Left colon (tissue), 2 donors: ENCODE measurements at regions of chr7 and their contacts with region 1.

Region 1: DNA sequence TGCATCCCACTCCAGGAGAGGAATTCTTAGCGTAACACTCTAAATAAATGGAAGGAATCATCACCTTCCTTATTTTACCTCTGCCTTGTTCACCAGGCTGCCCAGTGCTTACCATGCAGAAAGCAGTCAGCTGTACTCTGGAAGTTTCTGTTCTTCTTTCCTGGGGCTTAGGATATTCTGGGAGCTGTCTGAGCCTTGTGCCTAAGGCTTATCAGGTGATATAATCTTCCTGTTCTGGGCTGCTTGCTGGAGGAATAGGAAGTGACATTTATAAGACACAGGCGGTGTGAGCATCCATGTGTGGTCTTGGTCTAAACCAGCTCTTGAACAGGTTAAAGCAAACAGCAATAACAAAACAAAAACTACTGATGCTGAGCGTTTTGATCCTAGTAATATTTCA is 13.5 kb downstream of the KCTD7 start:
- DNase-seq: no peak
- ATAC-seq: no peak

Region 2: DNA sequence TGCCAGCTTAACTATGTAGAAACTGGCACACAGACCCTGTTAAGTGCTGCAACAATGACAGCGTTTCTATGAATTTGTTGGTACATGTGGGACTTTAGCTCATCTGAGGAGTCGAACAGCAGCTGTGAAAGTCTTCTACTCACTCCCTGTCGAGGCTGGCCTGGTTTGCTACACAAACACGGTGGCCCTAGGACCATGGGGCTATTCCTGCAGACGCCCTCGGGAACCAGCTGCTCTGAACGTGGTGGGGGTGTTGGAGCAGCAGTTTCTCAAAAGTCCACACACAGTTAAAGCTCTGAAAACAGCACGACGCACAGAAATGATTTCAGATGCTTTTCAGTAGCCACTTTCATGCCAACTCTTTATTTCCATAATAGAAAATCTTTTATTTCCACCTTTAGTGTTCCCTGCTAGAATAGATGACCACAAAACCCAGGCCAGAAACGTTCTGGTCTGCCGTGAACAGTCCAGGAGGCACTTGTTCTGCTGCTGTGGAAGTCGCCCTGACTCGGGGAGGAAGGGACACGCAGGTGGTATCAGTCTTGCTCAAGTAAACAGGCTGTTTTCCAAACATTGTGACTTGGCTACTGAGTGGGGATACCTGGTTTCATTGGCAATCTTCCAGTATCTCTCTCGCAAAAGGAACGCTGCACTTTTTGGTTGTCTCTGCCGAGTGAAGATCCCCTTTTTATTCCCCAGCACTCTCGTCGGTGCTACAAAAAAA is 681.7 kb before region 1 on chr7:
- intact Hi-C with region 1: no loop called
- DNase-seq: no peak
- ATAC-seq: no peak

Region 3: GRCh38 chr7:66583490-66584110 is 58.6 kb before region 1 on chr7:
- intact Hi-C with region 1: loop called in 1 of 2 experiments (anchors 10 kb)
- DNase-seq: no peak
- ATAC-seq: no peak